ENCODE measurements at regions of chr15 and their contacts with region 1.

Region 1: GRCh38 chr15:37100109-37100965 is at the start of gene MEIS2:
- DNase-seq: peak; percentile 84
- CTCF ChIP-seq: no peak

Region 2: DNA sequence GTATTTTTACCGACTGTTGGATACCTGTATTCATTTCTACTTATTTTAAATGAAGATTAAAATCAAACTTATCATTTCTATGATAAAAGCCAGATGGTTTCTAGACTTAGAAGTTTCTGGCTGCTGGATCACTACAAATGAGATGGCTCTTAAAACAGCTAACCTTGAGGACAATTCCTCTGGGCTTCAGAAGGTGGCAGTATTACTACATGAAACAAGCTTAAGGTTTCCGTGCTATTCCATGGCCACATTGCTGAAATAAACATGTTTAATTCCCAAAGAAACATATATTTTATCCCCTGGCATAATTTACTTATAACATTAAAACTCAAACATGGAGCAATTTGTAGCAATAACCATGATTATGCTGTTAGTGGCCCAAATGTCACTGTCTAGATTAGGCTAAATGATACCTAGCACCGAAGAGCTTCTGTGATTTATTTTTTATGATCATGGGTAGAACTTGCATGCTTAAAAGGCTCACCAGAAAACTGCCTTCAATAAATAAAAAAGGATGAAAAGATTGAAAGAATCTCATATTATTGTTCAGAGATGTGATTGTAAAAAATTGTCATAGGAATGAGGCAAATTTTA is 1811.2 kb before region 1 on chr15:
- in situ Hi-C with region 1: loop called (anchors 25 kb)
- DNase-seq: no peak
- CTCF ChIP-seq: peak; percentile 73

Region 3: GRCh38 chr15:35519541-35520149 is 1580.7 kb before region 1 on chr15:
- in situ Hi-C with region 1: loop called (anchors 25 kb)
- DNase-seq: no peak
- CTCF ChIP-seq: peak; percentile 58

Region 4: GRCh38 chr15:36501063-36501678 is 599.2 kb before region 1 on chr15:
- in situ Hi-C with region 1: loop called (anchors 10 kb)
- DNase-seq: peak; percentile 42
- CTCF ChIP-seq: peak; percentile 73

Region 5: DNA sequence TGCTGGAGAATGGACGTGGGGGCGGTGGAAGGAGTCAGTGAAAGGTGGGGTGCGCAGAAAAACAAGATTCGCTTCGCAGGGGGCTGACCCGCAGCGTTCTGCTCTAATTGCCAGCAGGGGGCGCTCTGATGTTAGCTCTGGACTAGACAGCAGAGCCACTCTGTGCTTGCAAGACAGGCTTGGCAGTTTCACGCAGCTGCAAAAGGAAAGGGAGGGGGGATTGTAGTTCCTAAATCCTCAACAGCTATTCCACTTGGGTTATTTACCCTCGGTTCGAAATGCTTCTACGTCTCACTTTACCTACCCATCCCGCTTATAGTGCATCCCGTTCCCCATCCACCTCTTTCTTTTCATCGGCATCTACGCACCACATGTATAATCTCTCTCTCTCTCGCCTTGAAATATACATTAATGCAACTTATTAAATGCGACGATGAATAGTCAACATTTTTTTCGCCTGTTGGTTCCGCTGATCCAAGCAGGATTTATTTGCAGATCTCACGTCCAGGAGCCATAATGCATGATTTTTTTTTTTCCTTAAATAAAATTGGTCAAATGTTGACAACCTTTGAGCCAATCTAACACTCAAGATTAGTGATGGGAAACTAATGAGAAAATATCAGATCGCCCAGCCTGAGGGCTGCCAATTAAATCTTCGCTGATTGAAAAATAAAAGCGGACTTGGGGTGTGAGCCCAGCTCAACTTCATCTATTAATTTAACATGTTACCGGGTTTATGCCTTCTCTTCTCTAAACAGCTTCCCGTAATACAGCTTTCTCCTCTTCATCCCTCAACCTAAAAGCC is 216.4 kb before region 1 on chr15:
- in situ Hi-C with region 1: loop called (anchors 10 kb)
- DNase-seq: peak; percentile 85
- CTCF ChIP-seq: peak; percentile 88

Region 6: GRCh38 chr15:37289109-37289765 is 188.9 kb after region 1 on chr15:
- in situ Hi-C with region 1: no loop called
- DNase-seq: no peak
- CTCF ChIP-seq: no peak

Region 7: DNA sequence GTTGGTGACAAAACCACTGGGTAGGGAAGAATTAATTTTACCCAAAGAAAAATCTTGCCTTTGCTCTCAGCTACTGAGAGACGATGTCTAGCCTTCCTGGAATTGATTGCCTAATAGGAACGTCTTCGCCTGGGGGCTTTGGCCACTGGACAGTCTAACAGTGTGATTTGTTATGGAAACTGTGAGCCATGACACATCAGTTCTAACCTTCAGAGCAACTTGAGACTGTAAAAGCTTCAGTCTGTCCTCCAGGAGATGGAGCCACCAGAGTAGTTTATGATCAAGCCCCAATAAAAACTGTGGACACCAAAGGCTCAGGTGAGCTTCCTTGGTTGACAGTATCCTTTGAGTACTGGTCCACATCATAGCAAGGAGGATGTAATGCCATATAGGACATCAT is 598.3 kb after region 1 on chr15:
- in situ Hi-C with region 1: no loop called
- DNase-seq: no peak
- CTCF ChIP-seq: no peak